GM12878 (cell line): ENCODE measurements at regions of chr11 and their contacts with region 1.

Region 1: GRCh38 chr11:58647141-58647699 is 24.8 kb downstream of the CNTF start:
- DNase-seq: peak; percentile 48
- ATAC-seq: peak; percentile 93
- H3K4me3 ChIP-seq: no peak overlapping the region
- H3K27ac ChIP-seq: peak overlapping the region; percentile 40; the same call in 1 of the 2 replicates
- H3K4me1 ChIP-seq: peaks cover 10% of the 10 kb centered on the region
- H3K27me3 ChIP-seq: no peaks in the 10 kb centered on the region
- CTCF ChIP-seq: peak in 2 of 3 experiments; percentile 21 to 40; a peak in 3 of 6 replicates
- EP300 ChIP-seq: peak; percentile 66 to 72; a peak in 2 of 4 replicates
- POLR2A ChIP-seq: no peak
- RAD21 ChIP-seq: peak; percentile 57; the same call in 1 of the 2 replicates

Region 2: DNA sequence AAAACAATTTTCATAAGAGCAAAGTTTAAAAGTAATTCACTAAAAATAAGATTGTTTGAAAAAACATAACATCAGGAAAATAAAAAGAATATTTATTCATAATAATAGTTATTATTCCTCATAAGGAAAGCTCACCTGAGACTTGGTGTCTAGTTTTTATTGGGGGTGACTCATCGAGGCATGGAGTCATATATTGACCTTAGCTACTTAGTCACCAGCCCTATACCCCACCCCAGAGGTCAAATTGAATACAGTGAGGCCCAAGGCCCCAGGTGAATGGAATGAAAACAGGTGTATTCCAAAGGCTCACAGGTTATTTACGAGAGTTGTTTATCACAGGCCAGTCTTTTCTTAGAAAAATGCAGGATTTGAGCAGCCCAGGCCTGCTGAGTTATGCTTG is 12.2 kb after region 1 on chr11:
- CTCF ChIA-PET with region 1: interaction called, 10 read pairs
- POLR2A ChIA-PET with region 1: no interaction called
- RAD21 ChIA-PET with region 1: interaction called, 6 read pairs
- SMC1A ChIA-PET with region 1: interaction called, 10 read pairs
- in situ Hi-C with region 1: no loop called
- intact Hi-C with region 1: no loop called
- DNase-seq: no peak
- ATAC-seq: no peak
- H3K4me3 ChIP-seq: no peak overlapping the region
- H3K27ac ChIP-seq: no peak overlapping the region
- H3K4me1 ChIP-seq: peaks cover 4% of the 10 kb centered on the region; the same call in 1 of the 2 replicates
- H3K27me3 ChIP-seq: no peaks in the 10 kb centered on the region
- CTCF ChIP-seq: no peak
- EP300 ChIP-seq: no peak
- POLR2A ChIP-seq: no peak
- RAD21 ChIP-seq: no peak